WTC11 (cell line): ENCODE measurements at regions of chr1 and their contacts with region 1.

Region 1: DNA sequence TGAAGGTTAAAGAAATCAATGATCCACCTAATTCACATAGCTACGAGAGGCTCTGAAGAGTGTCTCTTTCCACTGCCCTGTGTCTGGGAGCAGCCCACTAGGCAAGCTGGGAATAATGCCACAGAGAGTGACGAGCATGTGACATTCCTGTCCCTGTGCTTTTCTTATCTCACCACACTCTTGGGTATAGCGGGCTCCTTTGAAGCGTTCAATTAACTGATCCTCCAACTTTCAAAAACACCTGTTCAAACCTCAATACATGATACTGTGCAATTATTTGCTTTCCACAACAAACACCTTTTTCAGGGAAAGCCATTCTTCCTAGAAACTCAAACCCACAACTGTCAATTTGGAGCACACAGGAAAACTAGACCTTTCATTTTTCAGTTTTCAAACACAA is 43.4 kb downstream of the PLPP3 start:
- DNase-seq: no peak
- ATAC-seq: no peak; the same call in 1 of the 2 replicates
- H3K4me3 Mint-ChIP-seq: peak overlapping the region; percentile 33
- H3K27ac Mint-ChIP-seq: peak overlapping the region; percentile 99
- H3K4me1 Mint-ChIP-seq: no peaks in the 10 kb centered on the region; the same call in 1 of the 2 replicates
- H3K27me3 Mint-ChIP-seq: no peaks in the 10 kb centered on the region
- CTCF ChIP-seq: no peak

Region 2: DNA sequence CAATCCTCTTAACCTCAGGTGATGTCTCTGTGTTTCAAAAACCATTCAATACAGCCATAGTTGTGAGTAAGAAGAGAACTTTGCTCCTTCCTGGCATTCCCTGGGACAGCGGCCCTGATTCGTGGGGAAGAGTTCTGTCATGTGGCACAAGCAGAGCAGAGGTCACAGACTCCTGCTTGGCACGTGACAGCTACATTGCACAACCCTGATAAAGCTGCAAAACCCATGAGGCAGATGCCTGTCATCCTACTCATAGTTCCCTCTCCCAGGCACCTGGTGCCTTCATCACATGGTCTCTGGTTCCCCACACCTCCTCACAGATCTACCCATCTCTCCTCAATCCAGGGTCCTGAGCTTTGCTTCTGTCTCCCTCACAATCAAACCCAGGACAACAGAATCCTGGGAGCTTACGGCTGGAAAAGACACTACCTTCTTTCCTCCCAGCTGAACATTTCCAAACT is 27.4 kb before region 1 on chr1:
- CTCF ChIA-PET with region 1: no interaction called
- POLR2A ChIA-PET with region 1: no interaction called
- DNase-seq: no peak
- ATAC-seq: no peak
- H3K4me3 Mint-ChIP-seq: no peak overlapping the region
- H3K27ac Mint-ChIP-seq: peak overlapping the region; percentile 47
- H3K4me1 Mint-ChIP-seq: peaks cover 55% of the 10 kb centered on the region
- H3K27me3 Mint-ChIP-seq: no peaks in the 10 kb centered on the region
- CTCF ChIP-seq: no peak

Region 3: GRCh38 chr1:56547953-56548352 is 12.0 kb after region 1 on chr1:
- CTCF ChIA-PET with region 1: interaction called, 11 read pairs
- POLR2A ChIA-PET with region 1: interaction called, 12 read pairs
- DNase-seq: no peak
- ATAC-seq: no peak
- H3K4me3 Mint-ChIP-seq: peak overlapping the region; percentile 34
- H3K27ac Mint-ChIP-seq: peak overlapping the region; percentile 78
- H3K4me1 Mint-ChIP-seq: peaks cover 86% of the 10 kb centered on the region
- H3K27me3 Mint-ChIP-seq: no peaks in the 10 kb centered on the region
- CTCF ChIP-seq: no peak

Region 4: GRCh38 chr1:56774067-56774609 is 238.2 kb after region 1 on chr1:
- CTCF ChIA-PET with region 1: no interaction called
- POLR2A ChIA-PET with region 1: no interaction called
- DNase-seq: no peak
- ATAC-seq: no peak
- H3K4me3 Mint-ChIP-seq: no peak overlapping the region
- H3K27ac Mint-ChIP-seq: no peak overlapping the region
- H3K4me1 Mint-ChIP-seq: no peaks in the 10 kb centered on the region
- H3K27me3 Mint-ChIP-seq: no peaks in the 10 kb centered on the region; the same call in 1 of the 2 replicates
- CTCF ChIP-seq: no peak